Cardiac septum (tissue), 1 donor: ENCODE measurements at regions of chr1 and their contacts with region 1.

Region 1: GRCh38 chr1:205750138-205751035 is at the start of gene NUCKS1:
- DNase-seq: peak; percentile 98
- total RNA-seq, gene NUCKS1: 213 TPM

Region 2: GRCh38 chr1:205519541-205520131 is 230.8 kb before region 1 on chr1:
- intact Hi-C with region 1: no loop called
- DNase-seq: no peak

Region 3: DNA sequence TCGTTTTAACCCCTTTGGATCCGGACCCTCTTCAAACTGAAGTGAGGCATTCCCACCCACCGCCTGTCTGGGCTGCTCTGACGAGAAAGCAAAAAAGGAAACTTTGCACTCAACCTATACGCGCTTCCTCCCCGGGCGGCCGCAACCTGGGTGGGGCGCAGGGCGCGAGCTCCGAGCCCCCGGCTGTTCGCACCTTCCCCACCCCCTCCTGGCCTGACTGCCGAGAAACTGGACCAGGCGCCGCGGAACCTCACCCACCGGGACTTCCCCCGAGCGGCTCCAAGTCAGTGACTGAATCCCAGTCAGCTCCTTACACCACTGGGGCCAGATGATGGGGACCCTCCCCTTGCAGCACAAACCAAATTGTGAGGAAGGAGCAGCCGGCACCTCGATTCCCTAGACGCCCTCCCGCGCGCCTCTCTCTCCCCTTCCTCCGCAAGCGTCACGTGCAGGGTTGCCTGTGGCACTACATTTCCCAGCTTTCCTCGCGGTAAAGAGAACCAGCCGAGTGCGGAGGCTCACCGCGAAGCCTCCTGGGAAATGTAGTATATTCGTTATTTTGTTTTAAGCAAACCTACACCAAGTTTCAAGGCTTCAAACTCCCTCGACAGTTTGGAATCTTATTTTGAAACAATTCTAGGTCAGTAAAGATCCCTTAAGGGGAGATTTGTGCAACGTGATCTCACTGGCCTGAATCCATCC is 24.8 kb after region 1 on chr1 and contains the start of gene RAB29:
- intact Hi-C with region 1: loop called (anchors 2 kb)
- DNase-seq: peak; percentile 94
- total RNA-seq, gene RAB29: 21.3 TPM

Region 4: DNA sequence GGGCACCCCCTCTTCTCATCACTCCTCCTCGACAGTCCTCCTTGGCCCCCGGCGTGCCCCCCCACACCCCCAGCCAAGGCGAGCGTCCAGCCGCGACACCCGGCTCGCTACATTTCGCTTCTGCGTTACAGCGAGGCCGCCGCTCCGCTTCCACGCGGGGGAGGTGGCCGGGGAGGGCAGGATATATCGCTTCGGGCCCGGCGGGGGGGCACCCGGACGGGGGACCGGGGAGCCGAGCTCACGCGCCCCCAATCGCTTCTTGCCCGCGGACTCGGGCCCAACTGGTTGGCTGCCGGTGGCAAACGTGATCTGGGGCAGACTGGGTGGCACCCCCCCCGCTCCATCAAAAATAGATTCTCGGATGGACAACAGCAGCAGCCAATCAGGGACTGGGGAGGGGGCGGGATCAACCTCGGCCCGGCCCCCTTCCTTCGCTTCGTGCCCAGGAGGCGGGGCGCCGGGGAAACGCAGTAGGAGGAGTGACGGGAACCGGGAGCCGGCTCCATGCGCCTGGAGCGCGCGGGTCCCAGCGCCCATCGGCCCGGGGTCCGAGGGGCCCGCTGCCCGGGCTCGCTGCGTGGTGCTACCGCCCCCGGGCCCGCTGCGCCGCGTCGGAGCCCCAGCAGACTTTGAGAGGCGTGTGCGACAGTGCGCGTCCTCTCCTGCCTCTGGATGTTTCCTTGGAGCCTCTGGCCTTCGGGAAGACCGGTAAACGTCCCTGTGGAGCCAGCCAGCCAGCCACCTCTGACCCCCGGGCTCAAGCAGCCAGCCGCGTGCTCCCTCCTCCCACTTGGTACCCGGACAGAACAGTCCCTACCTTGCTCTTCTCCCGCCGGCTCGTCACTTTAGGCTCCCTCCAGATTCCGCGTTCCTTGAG is 62.7 kb after region 1 on chr1 and contains the start of gene SLC41A1:
- intact Hi-C with region 1: loop called (anchors 5 kb)
- DNase-seq: peak; percentile 95
- total RNA-seq, gene SLC41A1: 238 TPM

Region 5: DNA sequence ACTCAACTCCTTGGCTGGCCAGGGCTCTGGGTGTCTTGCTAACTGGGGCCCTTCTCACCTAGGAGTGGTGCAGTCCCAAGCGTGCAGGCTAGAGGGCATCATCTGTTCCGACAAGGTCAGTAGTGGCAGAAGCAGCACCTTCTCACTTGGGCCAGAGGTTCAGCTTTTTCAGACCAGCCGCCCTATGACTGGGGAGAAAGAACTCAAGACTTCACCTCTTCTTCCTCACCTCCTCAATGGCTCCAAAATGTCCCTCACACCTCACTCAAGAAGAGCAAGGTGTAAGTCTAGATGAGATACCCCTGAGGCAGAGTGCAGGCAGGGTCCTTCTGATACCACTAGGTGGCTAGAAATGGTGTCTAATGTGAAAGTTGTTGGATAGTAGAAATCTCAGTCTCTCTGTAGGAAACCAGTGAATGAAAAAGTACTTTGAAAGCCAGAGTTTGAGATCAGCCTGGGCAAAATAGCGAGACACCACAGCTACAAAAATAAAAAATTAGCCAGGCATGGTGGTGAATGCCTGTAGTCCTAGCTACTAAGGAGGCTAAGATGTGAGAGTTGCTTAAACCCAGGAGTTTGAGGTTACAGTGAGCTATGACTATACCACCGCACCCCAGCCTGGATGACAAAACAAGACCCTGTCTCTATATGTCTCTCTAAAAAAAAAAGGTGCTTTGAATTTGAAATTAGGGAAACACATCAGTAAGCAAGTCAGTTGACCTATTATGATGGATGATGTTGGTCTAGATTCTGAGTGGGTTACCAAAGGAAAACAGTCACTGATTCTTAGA is 1106.5 kb after region 1 on chr1:
- intact Hi-C with region 1: no loop called
- DNase-seq: no peak